IMR-90 (cell line): ENCODE measurements at regions of chr9 and their contacts with region 1.

Region 1: DNA sequence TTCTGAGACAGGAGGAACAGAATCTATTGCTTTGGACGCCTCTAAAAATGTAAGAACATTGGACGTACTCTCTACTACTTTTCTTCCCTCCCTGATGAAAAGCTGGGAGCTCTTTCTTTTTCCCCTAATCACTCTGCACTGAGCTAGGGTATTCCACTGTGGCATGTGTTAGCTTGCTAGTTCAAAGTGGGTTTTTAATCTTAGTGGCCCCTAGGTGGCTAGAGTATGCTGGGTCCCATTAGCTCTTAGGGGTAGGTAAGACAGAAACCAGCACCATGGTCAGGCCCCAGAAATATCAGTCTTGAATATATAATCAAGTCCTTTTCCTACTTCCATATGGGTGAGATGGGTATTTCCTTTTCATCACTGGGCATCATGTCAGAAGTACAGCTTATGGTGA is 945.2 kb upstream of the PTPRD start:
- DNase-seq: no peak
- ATAC-seq: no peak
- H3K4me3 ChIP-seq: no peak overlapping the region
- H3K27ac ChIP-seq: no peak overlapping the region
- H3K4me1 ChIP-seq: no peaks in the 10 kb centered on the region
- H3K27me3 ChIP-seq: no peaks in the 10 kb centered on the region
- CTCF ChIP-seq: no peak
- POLR2A ChIP-seq: no peak
- RAD21 ChIP-seq: no peak

Region 2: DNA sequence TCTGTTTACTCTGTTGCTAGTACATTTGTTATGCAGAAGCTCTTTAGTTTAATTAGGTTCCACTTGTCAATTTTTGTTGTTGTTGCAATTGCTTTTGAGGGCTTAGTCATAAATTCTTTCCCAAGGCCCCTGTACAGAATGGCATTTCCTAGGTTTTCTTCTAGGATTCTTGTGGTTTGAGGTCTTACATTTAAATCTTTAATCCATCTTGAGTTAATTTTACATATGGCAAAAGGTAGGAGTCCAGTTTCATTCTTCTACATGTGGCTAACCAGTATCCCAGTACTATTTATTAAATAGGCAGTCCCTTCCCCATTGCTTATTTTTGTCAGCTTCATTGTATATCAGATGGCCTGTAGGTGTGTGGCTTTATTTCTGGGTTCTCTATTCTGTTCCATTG is 1737.6 kb before region 1 on chr9:
- CTCF ChIA-PET with region 1: no interaction called
- POLR2A ChIA-PET with region 1: no interaction called
- dilution Hi-C with region 1: no loop called
- in situ Hi-C with region 1: no loop called
- intact Hi-C with region 1: loop called (anchors 5 kb)
- DNase-seq: no peak
- ATAC-seq: no peak
- H3K4me3 ChIP-seq: no peak overlapping the region
- H3K27ac ChIP-seq: no peak overlapping the region
- H3K4me1 ChIP-seq: no peaks in the 10 kb centered on the region
- H3K27me3 ChIP-seq: no peaks in the 10 kb centered on the region
- CTCF ChIP-seq: no peak
- POLR2A ChIP-seq: no peak
- RAD21 ChIP-seq: no peak

Region 3: DNA sequence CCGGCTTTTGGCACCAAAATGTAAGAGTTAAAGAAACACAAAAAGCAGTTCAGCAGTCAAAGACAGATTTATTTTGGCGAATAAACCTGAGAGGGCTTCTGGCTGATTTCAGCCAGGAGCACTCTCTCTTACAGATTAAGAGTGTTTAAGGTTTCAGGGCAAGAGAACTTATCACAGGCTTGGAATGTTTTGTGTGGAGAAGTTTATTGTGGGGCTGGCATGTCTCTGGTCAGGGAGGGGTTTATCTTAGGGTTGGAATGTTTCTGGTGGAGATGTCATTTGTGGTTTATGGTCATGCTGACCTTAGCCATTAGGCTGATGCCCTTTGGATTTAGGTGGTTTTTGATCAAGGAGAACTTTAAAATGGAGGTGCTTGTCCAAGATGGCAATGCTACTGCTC is 323.0 kb before region 1 on chr9:
- CTCF ChIA-PET with region 1: no interaction called
- POLR2A ChIA-PET with region 1: no interaction called
- dilution Hi-C with region 1: no loop called
- in situ Hi-C with region 1: no loop called
- intact Hi-C with region 1: no loop called
- DNase-seq: no peak
- ATAC-seq: no peak
- H3K4me3 ChIP-seq: no peak overlapping the region
- H3K27ac ChIP-seq: no peak overlapping the region
- H3K4me1 ChIP-seq: no peaks in the 10 kb centered on the region
- H3K27me3 ChIP-seq: no peaks in the 10 kb centered on the region
- CTCF ChIP-seq: no peak
- POLR2A ChIP-seq: no peak
- RAD21 ChIP-seq: no peak